WTC11 (cell line): ENCODE measurements at regions of chr10 and their contacts with region 1.

Region 1: DNA sequence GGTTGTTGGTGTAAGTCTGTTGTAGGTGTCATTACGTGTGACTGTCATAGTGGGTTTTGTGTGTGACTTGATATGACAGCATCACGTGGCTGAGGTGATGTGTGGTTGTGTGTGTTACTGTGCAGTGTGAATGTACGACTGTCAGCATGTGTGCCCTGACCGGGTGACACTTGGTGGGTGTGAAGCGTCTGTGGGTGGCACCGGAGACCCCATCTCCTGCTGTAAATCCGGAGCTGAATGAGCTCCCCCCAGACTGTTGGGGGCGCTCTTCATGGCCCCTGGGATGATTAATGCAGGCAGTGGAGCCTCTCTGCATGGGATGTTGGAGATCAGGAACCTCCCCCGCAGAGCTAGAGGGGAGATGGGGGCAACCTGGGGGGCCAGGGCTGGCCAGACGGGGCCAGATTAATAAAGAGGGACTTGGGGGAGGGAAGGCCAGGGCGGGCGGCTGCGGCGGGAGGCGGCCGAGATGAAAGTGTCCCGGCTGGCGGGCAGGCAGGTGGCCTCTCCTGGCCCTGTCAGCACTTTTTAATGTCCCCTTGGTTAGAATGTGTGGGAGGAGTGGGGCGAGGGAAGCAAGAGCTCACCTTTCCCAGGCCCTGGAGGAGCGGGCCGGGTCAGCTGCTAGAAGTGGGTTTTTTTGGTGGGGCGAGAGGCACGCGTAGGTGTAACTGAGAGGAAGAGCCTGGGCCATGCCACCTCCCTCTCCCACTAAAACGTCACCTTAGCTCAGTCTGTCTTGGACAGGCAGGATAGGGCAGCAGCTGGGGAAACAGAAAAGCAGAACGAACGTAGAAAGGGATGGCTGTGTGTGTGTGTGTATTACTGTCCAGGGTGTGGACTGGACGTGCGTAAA is 34.1 kb downstream of the HIF1AN start:
- DNase-seq: peak; percentile 62
- ATAC-seq: peak; percentile 82
- H3K4me3 Mint-ChIP-seq: no peak overlapping the region
- H3K27ac Mint-ChIP-seq: no peak overlapping the region
- H3K4me1 Mint-ChIP-seq: no peaks in the 10 kb centered on the region
- H3K27me3 Mint-ChIP-seq: peaks cover 35% of the 10 kb centered on the region
- CTCF ChIP-seq: no peak; the same call in 1 of the 2 replicates

Region 2: GRCh38 chr10:100496567-100496966 is 73.3 kb before region 1 on chr10:
- CTCF ChIA-PET with region 1: no interaction called
- POLR2A ChIA-PET with region 1: no interaction called
- DNase-seq: no peak
- ATAC-seq: no peak
- H3K4me3 Mint-ChIP-seq: no peak overlapping the region
- H3K27ac Mint-ChIP-seq: no peak overlapping the region
- H3K4me1 Mint-ChIP-seq: no peaks in the 10 kb centered on the region
- H3K27me3 Mint-ChIP-seq: peaks cover 98% of the 10 kb centered on the region
- CTCF ChIP-seq: no peak

Region 3: GRCh38 chr10:100586959-100587358 is 17.1 kb after region 1 on chr10:
- CTCF ChIA-PET with region 1: interaction called, 13 read pairs
- POLR2A ChIA-PET with region 1: no interaction called
- DNase-seq: no peak
- ATAC-seq: peak; percentile 57
- H3K4me3 Mint-ChIP-seq: no peak overlapping the region
- H3K27ac Mint-ChIP-seq: no peak overlapping the region
- H3K4me1 Mint-ChIP-seq: no peaks in the 10 kb centered on the region
- H3K27me3 Mint-ChIP-seq: peaks cover 35% of the 10 kb centered on the region
- CTCF ChIP-seq: no peak

Region 4: DNA sequence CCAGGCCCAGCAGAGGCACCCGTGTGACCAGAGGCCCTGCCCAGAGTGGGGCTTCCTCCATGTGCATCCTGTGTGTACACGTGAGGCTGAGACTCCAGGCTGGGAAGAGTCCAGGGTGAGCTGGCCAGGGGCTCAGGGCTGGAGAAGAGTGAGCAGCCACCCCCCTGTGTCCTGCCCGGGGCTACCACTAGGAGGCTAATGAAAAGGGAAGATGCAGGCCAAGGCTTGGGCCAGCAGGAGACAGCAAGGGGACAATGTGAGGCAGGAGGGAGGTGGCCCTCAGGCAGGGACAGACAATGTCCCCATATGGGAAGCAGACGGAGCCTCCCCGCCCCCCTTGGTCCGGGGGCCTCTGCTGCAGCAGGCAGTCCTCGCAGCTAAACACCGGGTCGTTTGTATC is 67.9 kb after region 1 on chr10:
- CTCF ChIA-PET with region 1: interaction called, 29 read pairs
- POLR2A ChIA-PET with region 1: no interaction called
- DNase-seq: peak; percentile 87
- ATAC-seq: peak; percentile 88
- H3K4me3 Mint-ChIP-seq: peak overlapping the region; percentile 29
- H3K27ac Mint-ChIP-seq: no peak overlapping the region
- H3K4me1 Mint-ChIP-seq: peaks cover 35% of the 10 kb centered on the region
- H3K27me3 Mint-ChIP-seq: peaks cover 14% of the 10 kb centered on the region
- CTCF ChIP-seq: peak; percentile 76

Region 5: DNA sequence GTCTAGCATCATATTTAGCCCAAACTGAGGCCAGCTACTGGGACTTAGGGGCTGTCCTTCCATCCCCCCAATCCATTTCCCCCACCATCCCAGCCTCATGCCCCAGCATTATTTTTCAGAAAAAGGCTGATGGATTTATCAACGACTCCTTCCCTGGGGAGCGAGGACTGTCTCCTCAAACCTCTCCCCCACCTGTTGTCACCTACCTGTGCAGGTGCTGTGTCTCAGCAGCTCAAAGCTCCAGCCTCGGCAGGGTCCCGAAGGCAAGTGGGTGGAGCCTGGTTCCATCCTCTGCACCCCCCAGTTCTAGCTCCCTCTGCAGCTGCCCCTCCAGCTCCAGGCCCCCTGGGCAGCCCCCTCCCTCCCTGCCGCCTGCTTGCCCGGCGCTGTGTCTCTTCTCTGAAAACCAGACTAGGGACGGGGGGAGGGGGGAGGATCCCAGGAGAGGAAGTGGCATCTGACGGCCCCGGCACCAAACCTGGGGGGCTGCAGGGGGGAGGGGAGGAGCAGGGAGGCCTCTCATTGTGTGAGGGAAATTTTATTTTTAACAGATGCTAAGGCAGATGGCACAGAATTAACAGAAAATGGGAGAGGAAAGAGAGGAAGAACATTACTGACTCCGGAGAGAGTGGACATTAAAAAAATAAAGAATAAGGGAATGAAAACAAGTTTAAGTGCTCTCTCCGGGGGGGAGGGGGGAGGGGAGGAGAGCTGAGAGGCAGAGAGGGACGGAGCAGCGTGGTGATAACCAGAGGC is 113.9 kb after region 1 on chr10:
- CTCF ChIA-PET with region 1: interaction called, 13 read pairs
- POLR2A ChIA-PET with region 1: interaction called, 4 read pairs
- DNase-seq: peak; percentile 44
- ATAC-seq: peak; percentile 39
- H3K4me3 Mint-ChIP-seq: peak overlapping the region; percentile 60
- H3K27ac Mint-ChIP-seq: no peak overlapping the region
- H3K4me1 Mint-ChIP-seq: peaks cover 39% of the 10 kb centered on the region
- H3K27me3 Mint-ChIP-seq: peaks cover 87% of the 10 kb centered on the region
- CTCF ChIP-seq: no peak

Region 6: DNA sequence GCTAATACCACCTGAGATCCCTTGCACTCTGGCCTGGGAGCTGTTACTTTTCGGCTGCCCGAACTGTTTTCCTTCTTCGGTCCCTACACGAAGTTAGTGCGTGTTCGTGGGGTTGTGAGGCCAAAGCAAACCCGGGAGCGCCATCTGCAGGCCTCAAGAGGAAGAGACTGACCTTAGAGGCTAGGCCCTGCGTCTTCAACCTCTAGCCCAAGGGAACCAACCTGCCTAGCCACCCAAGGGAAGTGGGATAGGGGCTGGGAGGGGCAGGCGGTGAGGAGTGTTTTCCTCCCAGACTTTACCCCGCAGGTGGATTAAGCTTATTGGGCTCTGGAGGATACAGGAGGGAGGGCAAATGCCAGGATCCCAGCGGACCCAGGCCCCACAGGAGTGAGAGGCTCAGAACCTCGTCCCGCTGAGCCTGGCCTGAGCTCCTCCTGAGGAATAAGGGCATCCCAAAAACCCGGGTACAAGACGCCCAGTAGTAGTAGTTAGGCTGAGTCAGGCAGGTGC is 173.8 kb after region 1 on chr10:
- CTCF ChIA-PET with region 1: interaction called, 85 read pairs
- POLR2A ChIA-PET with region 1: interaction called, 6 read pairs
- DNase-seq: peak; percentile 57
- ATAC-seq: peak; percentile 3; the same call in 1 of the 2 replicates
- H3K4me3 Mint-ChIP-seq: peak overlapping the region; percentile 52
- H3K27ac Mint-ChIP-seq: no peak overlapping the region
- H3K4me1 Mint-ChIP-seq: peaks cover 65% of the 10 kb centered on the region
- H3K27me3 Mint-ChIP-seq: peaks cover 96% of the 10 kb centered on the region
- CTCF ChIP-seq: peak; percentile 58; the same call in 1 of the 2 replicates

Region 7: DNA sequence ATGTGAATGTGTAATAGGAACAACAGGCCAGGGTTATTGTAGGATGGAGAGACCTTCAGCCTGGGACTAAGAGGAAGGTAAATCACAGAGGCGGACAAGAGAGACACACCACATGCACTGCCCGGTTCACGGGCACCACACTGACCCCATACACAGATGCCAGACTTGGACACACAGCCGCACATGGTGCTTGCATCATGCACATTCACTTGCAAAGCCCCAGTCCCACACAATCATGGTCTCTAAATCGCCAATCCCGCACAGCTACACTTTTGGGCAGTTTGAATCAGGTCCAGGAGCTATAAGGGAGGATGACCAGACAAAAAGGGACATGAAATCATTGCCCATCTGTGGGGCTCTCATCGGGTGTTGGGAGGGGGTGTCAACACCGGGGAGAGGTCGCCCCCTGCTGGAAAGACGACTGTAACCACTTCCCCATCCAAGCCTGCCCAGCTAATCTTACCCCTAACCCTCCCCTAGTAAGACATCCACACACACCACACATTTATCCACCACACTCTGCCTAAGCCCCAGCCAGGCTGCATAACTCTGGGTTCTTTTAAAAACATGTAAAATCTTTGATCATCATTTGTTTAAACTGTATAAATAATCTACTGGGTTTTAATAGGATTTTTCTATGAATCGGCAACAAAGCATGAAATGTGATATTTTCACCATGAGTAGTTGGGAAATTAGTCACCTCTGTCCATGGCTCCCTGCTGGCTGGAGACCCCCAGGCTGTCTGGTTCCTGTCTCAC is 302.4 kb after region 1 on chr10:
- CTCF ChIA-PET with region 1: interaction called, 62 read pairs
- POLR2A ChIA-PET with region 1: interaction called, 7 read pairs
- DNase-seq: peak; percentile 86
- ATAC-seq: peak; percentile 88
- H3K4me3 Mint-ChIP-seq: no peak overlapping the region
- H3K27ac Mint-ChIP-seq: no peak overlapping the region
- H3K4me1 Mint-ChIP-seq: peaks cover 20% of the 10 kb centered on the region
- H3K27me3 Mint-ChIP-seq: peaks cover 37% of the 10 kb centered on the region
- CTCF ChIP-seq: peak; percentile 76